Posterior vena cava (tissue), 2 donors: ENCODE measurements at regions of chr4 and their contacts with region 1.

Region 1: GRCh38 chr4:179415037-179415846 is 1973.0 kb upstream of the AGA start:
- DNase-seq: no peak

Region 2: GRCh38 chr4:179472164-179472563 is 56.9 kb after region 1 on chr4:
- intact Hi-C with region 1: loop called in 1 of 2 experiments (anchors 2 kb)
- DNase-seq: no peak

Region 3: DNA sequence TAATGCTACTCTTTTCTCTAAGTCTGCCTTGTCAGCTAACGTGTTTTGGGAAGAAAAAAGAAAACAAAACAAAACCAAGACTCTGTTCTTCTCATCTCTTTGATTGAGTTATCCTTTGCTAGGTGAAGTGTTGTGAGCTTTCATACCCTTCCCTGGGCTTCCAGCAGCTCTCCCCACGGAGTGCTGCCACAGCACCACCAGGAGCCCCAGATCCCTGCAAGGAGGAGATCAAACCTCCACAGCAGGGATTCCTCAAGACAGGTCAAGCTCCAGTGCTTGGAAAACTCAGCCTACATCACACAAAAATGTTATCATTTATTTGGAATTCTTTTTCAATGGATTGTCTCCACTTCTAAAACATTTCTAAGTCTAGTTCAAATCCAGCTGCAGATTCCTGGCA is 846.1 kb after region 1 on chr4:
- intact Hi-C with region 1: no loop called
- DNase-seq: no peak